ENCODE measurements at regions of chr19 and their contacts with region 1.

Region 1: GRCh38 chr19:45779231-45780145 is 2.8 kb downstream of the DMPK start:
- DNase-seq: peak; percentile 84
- H3K4me3 ChIP-seq: no peak overlapping the region
- H3K27ac ChIP-seq: no peak overlapping the region
- H3K4me1 ChIP-seq: peaks cover 5% of the 10 kb centered on the region
- H3K27me3 ChIP-seq: no peaks in the 10 kb centered on the region
- CTCF ChIP-seq: peak; percentile 51 to 67
- POLR2A ChIP-seq: no peak

Region 2: GRCh38 chr19:45746866-45747265 is 32.6 kb before region 1 on chr19:
- CTCF ChIA-PET with region 1: no interaction called
- POLR2A ChIA-PET with region 1: no interaction called
- dilution Hi-C with region 1: no loop called
- intact Hi-C with region 1: no loop called
- DNase-seq: no peak
- H3K4me3 ChIP-seq: no peak overlapping the region
- H3K27ac ChIP-seq: no peak overlapping the region
- H3K4me1 ChIP-seq: no peaks in the 10 kb centered on the region
- H3K27me3 ChIP-seq: peaks cover 8% of the 10 kb centered on the region in 2 experiments
- CTCF ChIP-seq: no peak
- POLR2A ChIP-seq: no peak

Region 3: GRCh38 chr19:45792470-45793177 is 13.1 kb after region 1 on chr19 and contains the start of gene DMWD:
- CTCF ChIA-PET with region 1: interaction called, 10 read pairs
- POLR2A ChIA-PET with region 1: interaction called, 19 read pairs
- dilution Hi-C with region 1: no loop called
- intact Hi-C with region 1: no loop called
- DNase-seq: peak; percentile 99
- H3K4me3 ChIP-seq: peak within 1 kb of the TSS; percentile 83 to 88 (median 85)
- H3K27ac ChIP-seq: peak within 1 kb of the TSS; percentile 57
- H3K4me1 ChIP-seq: peaks cover 16% of the 10 kb centered on the region
- H3K27me3 ChIP-seq: no peaks in the 10 kb centered on the region
- CTCF ChIP-seq: no peak
- POLR2A ChIP-seq: peak; percentile 89
- total RNA-seq, gene DMWD: 81.1 and 81.6 TPM in 2 replicates

Region 4: DNA sequence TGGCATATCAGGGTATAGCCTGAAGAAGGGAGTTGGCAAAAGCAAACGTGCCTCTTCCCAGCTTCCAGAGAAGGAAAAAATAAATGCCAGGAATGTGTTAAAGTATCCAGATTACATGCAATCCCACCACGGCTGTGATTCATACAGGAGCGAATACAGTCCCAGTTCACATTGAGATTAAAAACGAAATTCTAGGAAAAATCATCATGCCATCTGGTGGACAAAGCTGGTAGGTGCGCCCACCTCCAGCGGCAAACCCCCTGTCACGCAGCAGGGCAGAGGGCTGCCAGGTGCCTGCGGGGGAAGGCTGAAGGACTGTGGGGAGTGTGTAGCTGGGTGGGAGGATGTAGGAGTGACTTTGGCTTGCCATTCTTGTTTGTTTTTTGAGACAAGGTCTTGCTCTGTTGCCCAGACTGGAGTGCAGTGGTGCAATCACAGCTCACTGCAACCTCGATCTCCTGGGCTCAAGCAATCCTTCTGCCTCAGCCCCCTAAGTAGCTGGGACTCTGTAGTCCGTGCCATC is 19.6 kb after region 1 on chr19:
- CTCF ChIA-PET with region 1: interaction called, 16 read pairs
- POLR2A ChIA-PET with region 1: interaction called, 6 read pairs
- dilution Hi-C with region 1: no loop called
- intact Hi-C with region 1: no loop called
- DNase-seq: peak; percentile 79
- H3K4me3 ChIP-seq: no peak overlapping the region
- H3K27ac ChIP-seq: no peak overlapping the region
- H3K4me1 ChIP-seq: no peaks in the 10 kb centered on the region
- H3K27me3 ChIP-seq: no peaks in the 10 kb centered on the region
- CTCF ChIP-seq: peak; percentile 70 to 77
- POLR2A ChIP-seq: no peak

Measured in endothelial cell of umbilical vein (primary cell).